Heart right ventricle (tissue), 16 donors: ENCODE measurements at regions of chr1 and their contacts with region 1.

Region 1: GRCh38 chr1:178282949-178283367 is 189.1 kb downstream of the RASAL2 start:
- DNase-seq: no peak
- ATAC-seq: peak in 6 of 8 donors; percentile 7 to 58 (median 46)
- H3K4me3 ChIP-seq: no peak overlapping the region
- H3K27ac ChIP-seq: no peak overlapping the region
- H3K4me1 ChIP-seq: peaks cover 0 to 58% (median 33%) of the 10 kb centered on the region in 9 donors
- H3K27me3 ChIP-seq: no peaks in the 10 kb centered on the region
- CTCF ChIP-seq: peak in 7 of 9 donors; percentile 38 to 72 (median 54)

Region 2: GRCh38 chr1:177948336-177948972 is 334.5 kb before region 1 on chr1:
- intact Hi-C with region 1: loop called in 4 of 10 experiments (anchors 10 kb)
- DNase-seq: peak in 1 of 2 donors; percentile 46
- ATAC-seq: peak in 7 of 8 donors; percentile 45 to 77 (median 56)
- H3K4me3 ChIP-seq: no peak overlapping the region
- H3K27ac ChIP-seq: no peak overlapping the region
- H3K4me1 ChIP-seq: peaks cover 0 to 10% (median 0%) of the 10 kb centered on the region in 9 donors
- H3K27me3 ChIP-seq: no peaks in the 10 kb centered on the region
- CTCF ChIP-seq: peak; percentile 77 to 91 (median 89)

Region 3: GRCh38 chr1:177959811-177960515 is 323.0 kb before region 1 on chr1:
- intact Hi-C with region 1: loop called in 3 of 10 experiments (anchors 10 kb)
- DNase-seq: no peak
- ATAC-seq: peak in 4 of 8 donors; percentile 37 to 77 (median 54)
- H3K4me3 ChIP-seq: no peak overlapping the region
- H3K27ac ChIP-seq: no peak overlapping the region
- H3K4me1 ChIP-seq: no peaks in the 10 kb centered on the region
- H3K27me3 ChIP-seq: no peaks in the 10 kb centered on the region
- CTCF ChIP-seq: peak in 8 of 9 donors; percentile 29 to 54 (median 36)

Region 4: DNA sequence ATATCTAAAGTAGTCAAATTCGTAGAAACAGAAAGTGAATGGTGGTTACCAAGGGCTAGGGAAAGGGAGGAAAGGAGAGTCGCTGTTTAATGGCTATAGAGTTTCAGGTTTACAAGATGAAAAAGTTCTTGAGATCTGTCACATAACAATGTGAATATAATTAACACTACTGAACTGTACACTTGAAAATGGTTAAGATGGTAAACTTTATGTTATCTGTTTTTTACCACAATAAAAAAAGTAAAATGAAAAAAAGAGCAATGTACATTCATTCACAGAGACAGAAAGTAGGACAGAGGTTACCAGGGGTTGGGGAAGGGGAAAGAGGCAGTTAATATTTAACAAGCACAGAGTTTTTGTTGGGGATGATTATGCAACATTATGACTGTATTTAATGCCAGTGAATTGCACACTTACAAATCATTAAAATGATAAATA is 259.8 kb before region 1 on chr1:
- intact Hi-C with region 1: loop called in 2 of 10 experiments (anchors 5 to 10 kb)
- DNase-seq: no peak
- ATAC-seq: no peak
- H3K4me3 ChIP-seq: no peak overlapping the region
- H3K27ac ChIP-seq: no peak overlapping the region
- H3K4me1 ChIP-seq: peaks cover 0 to 4% (median 0%) of the 10 kb centered on the region in 9 donors
- H3K27me3 ChIP-seq: no peaks in the 10 kb centered on the region
- CTCF ChIP-seq: no peak

Region 5: GRCh38 chr1:178048426-178048825 is 234.5 kb before region 1 on chr1:
- intact Hi-C with region 1: loop called in 1 of 10 experiments (anchors 5 kb)
- DNase-seq: no peak
- ATAC-seq: no peak
- H3K4me3 ChIP-seq: no peak overlapping the region
- H3K27ac ChIP-seq: no peak overlapping the region
- H3K4me1 ChIP-seq: peaks cover 0 to 33% (median 20%) of the 10 kb centered on the region in 9 donors
- H3K27me3 ChIP-seq: no peaks in the 10 kb centered on the region
- CTCF ChIP-seq: no peak

Region 6: GRCh38 chr1:178055779-178056471 is 227.0 kb before region 1 on chr1:
- intact Hi-C with region 1: loop called in 2 of 10 experiments (anchors 1 to 5 kb)
- DNase-seq: peak in 1 of 2 donors; percentile 38
- ATAC-seq: peak in 6 of 8 donors; percentile 43 to 64 (median 48)
- H3K4me3 ChIP-seq: no peak overlapping the region
- H3K27ac ChIP-seq: peak overlapping the region; percentile 72 to 95 (median 82)
- H3K4me1 ChIP-seq: peaks cover 31 to 97% (median 90%) of the 10 kb centered on the region in 9 donors
- H3K27me3 ChIP-seq: no peaks in the 10 kb centered on the region
- CTCF ChIP-seq: peak in 7 of 9 donors; percentile 4 to 53 (median 26)

Region 7: GRCh38 chr1:178093205-178093957 is 189.6 kb before region 1 on chr1:
- intact Hi-C with region 1: loop called in 4 of 10 experiments (anchors 5 to 10 kb)
- DNase-seq: peak; percentile 91 to 95
- ATAC-seq: peak; percentile 83 to 94 (median 90)
- H3K4me3 ChIP-seq: peak overlapping the region; percentile 45 to 100 (median 96)
- H3K27ac ChIP-seq: peak overlapping the region; percentile 75 to 97 (median 94)
- H3K4me1 ChIP-seq: peaks cover 0 to 53% (median 45%) of the 10 kb centered on the region in 9 donors
- H3K27me3 ChIP-seq: peaks cover 0 to 14% (median 0%) of the 10 kb centered on the region in 7 donors
- CTCF ChIP-seq: peak in 1 of 9 donors; percentile 14

Region 8: DNA sequence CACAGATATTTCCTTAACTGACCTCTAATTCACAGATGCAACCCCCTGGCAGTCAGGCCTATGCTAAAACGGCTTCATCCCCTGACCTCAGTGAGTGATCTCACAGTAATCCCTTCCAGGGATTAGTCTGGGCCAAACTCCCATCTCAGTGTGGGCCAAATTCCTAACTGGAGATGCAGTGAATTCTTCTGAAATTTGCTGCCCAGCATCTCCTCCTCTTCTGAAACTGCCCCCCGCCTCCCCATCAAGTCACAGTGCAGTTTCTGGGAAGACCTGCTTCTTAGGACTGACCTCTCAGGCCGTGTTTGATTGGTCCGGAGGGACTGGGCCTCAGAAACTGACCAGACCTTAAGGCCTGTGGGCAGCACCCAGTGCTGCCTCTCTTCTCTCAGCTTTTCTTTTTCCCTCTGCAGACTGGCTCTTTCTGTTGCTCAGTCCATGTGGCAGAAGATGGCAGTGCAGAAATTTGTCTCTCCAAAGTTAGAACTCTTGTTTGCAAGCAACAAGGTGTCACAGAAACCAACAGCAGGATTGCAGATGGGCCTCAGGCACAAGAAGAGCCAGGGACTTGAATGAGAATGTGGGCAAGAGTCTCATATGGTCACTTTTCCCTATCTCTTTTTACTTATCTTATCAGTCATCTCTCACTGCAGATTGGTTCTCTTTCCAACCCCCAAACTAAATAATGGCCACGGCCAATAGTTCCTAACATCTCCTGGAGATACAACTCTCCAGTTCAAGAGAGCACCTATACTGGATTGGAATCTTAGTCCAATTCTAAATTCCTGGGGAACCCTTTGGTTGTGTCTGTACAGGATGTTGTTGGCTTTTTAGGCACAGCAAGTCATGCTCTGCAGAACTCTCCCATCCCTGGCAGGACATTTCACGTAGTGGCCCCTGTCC is 346.5 kb after region 1 on chr1:
- intact Hi-C with region 1: no loop called
- DNase-seq: peak in 1 of 2 donors; percentile 33
- ATAC-seq: peak in 6 of 8 donors; percentile 33 to 89 (median 74)
- H3K4me3 ChIP-seq: no peak overlapping the region
- H3K27ac ChIP-seq: peak overlapping the region in 4 of 10 donors; percentile 6 to 53 (median 16)
- H3K4me1 ChIP-seq: peaks cover 0 to 14% (median 3%) of the 10 kb centered on the region in 9 donors
- H3K27me3 ChIP-seq: no peaks in the 10 kb centered on the region
- CTCF ChIP-seq: no peak